HepG2 (cell line): ENCODE measurements at regions of chr2 and their contacts with region 1.

Region 1: GRCh38 chr2:25878361-25879132 is at the start of gene ASXL2:
- DNase-seq: peak; percentile 97
- ATAC-seq: peak; percentile 92
- H3K4me3 ChIP-seq: peak within 1 kb of the TSS; percentile 97 to 100 (median 99)
- H3K27ac ChIP-seq: peak within 1 kb of the TSS; percentile 88
- H3K4me1 ChIP-seq: peaks cover 65% of the 10 kb centered on the region
- H3K27me3 ChIP-seq: no peaks in the 10 kb centered on the region; a peak in 1 of 5 replicates
- CTCF ChIP-seq: peak; percentile 45
- EP300 ChIP-seq: no peak
- POLR2A ChIP-seq: peak; percentile 95 to 96
- RAD21 ChIP-seq: peak; percentile 58
- total RNA-seq, gene ASXL2: 12.1 and 20.6 TPM in 2 replicates

Region 2: GRCh38 chr2:25301453-25302352 is 576.8 kb before region 1 on chr2:
- CTCF ChIA-PET with region 1: no interaction called
- POLR2A ChIA-PET with region 1: no interaction called
- in situ Hi-C with region 1: no loop called
- intact Hi-C with region 1: no loop called
- DNase-seq: no peak
- ATAC-seq: no peak
- H3K4me3 ChIP-seq: no peak overlapping the region
- H3K27ac ChIP-seq: no peak overlapping the region
- H3K4me1 ChIP-seq: peaks cover under 1% of the 10 kb centered on the region; the same call in 1 of the 2 replicates
- H3K27me3 ChIP-seq: no peaks in the 10 kb centered on the region
- CTCF ChIP-seq: no peak
- EP300 ChIP-seq: no peak
- POLR2A ChIP-seq: no peak
- RAD21 ChIP-seq: no peak

Region 3: DNA sequence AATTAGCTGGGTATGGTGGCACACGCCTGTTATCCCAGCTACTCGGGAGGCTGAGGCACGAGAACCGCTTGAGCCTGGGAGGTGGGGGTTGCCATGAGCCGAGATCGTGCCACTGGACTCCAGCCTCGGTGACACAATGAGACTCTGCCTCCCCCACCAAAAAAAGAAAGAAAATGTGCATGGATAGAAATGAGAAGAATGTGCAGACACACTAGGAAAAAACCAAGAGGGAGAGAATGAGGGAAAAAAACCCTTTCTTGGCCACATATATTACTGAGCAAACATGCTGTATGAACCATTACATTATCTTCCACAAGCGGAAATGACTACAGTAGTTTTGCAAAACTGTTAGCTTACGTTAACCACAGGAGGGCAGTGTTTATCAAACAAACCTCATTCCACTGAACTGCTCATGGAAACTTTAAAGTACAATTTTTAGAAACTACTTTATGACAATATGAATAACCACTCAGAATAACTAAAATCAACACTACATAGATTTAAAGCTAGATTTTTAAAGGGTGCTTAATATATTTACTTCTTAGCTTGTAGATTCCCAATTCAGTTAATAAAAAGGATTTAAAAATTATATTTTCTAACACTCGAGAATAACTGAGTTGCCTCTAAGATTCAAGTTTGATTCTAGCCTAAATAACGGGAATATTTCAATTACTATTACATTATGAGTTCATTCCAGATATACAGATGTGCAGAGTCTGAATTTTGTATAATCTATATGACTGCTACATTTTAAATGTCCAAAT is 26.6 kb before region 1 on chr2:
- CTCF ChIA-PET with region 1: no interaction called
- POLR2A ChIA-PET with region 1: interaction called, 28 read pairs
- in situ Hi-C with region 1: no loop called
- intact Hi-C with region 1: no loop called
- DNase-seq: peak; percentile 86
- ATAC-seq: peak; percentile 92
- H3K4me3 ChIP-seq: no peak overlapping the region; a peak in 1 of 6 replicates
- H3K27ac ChIP-seq: peak overlapping the region; percentile 50
- H3K4me1 ChIP-seq: peaks cover 21% of the 10 kb centered on the region
- H3K27me3 ChIP-seq: no peaks in the 10 kb centered on the region
- CTCF ChIP-seq: peak; percentile 87
- EP300 ChIP-seq: peak in 1 of 2 experiments; percentile 35; a peak in 1 of 4 replicates
- POLR2A ChIP-seq: no peak
- RAD21 ChIP-seq: peak; percentile 85

Region 4: DNA sequence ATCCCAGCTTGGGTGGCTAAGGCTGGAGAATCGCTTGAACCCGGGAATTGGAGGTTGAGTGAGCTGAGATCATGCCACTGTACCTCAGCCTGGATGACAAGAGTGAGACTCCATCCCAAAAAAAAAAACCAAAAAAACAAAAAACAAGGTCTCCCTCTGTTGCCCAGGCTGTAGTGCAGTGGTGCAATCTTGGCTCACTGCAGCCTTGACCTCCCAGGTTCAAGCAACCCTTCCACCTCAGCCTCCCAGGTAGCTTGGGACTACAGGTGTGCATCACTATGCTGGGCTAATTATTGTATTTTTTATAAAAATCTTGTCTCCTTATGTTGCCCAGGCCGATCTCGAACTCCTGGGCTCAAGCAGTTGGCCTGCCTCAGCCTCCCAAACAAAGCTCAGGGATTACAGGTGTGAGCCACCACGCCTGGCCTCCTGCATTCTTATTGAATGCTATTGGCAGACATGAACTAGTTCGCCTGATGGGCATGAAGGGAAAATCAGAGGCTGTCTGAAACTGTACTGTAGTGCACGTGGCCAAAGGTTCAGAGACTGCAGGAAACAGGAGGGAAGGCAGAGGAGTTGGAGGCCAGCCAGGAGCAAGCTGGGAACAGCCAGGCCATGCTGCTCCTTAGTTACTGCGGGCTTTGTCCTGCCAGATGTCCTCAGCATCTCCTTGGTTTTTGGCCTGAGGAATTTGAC is 15.7 kb after region 1 on chr2:
- CTCF ChIA-PET with region 1: no interaction called
- POLR2A ChIA-PET with region 1: interaction called, 45 read pairs
- in situ Hi-C with region 1: no loop called
- intact Hi-C with region 1: no loop called
- DNase-seq: peak; percentile 49
- ATAC-seq: peak; percentile 81
- H3K4me3 ChIP-seq: no peak overlapping the region
- H3K27ac ChIP-seq: no peak overlapping the region
- H3K4me1 ChIP-seq: peaks cover 43% of the 10 kb centered on the region
- H3K27me3 ChIP-seq: no peaks in the 10 kb centered on the region
- CTCF ChIP-seq: no peak
- EP300 ChIP-seq: 0 out of 4 replicates have a peak, but pooled peaks of 1 of the 2 experiments have one; percentile 16
- POLR2A ChIP-seq: no peak
- RAD21 ChIP-seq: no peak

Region 5: GRCh38 chr2:25951071-25951547 is 72.6 kb after region 1 on chr2:
- CTCF ChIA-PET with region 1: no interaction called
- POLR2A ChIA-PET with region 1: interaction called, 11 read pairs
- in situ Hi-C with region 1: no loop called
- intact Hi-C with region 1: no loop called
- DNase-seq: peak; percentile 83
- ATAC-seq: peak; percentile 85
- H3K4me3 ChIP-seq: peak overlapping the region in 1 of 3 experiments; percentile 14; a peak in 1 of 6 replicates
- H3K27ac ChIP-seq: no peak overlapping the region
- H3K4me1 ChIP-seq: peaks cover 39% of the 10 kb centered on the region
- H3K27me3 ChIP-seq: no peaks in the 10 kb centered on the region
- CTCF ChIP-seq: peak; percentile 98
- EP300 ChIP-seq: 0 out of 4 replicates have a peak, but pooled peaks of 1 of the 2 experiments have one; percentile 15
- POLR2A ChIP-seq: no peak
- RAD21 ChIP-seq: peak; percentile 98

Region 6: GRCh38 chr2:26345545-26346453 is 467.3 kb after region 1 on chr2 and contains the start of gene SELENOI:
- CTCF ChIA-PET with region 1: no interaction called
- POLR2A ChIA-PET with region 1: interaction called, 10 read pairs
- in situ Hi-C with region 1: no loop called
- intact Hi-C with region 1: no loop called
- DNase-seq: peak; percentile 100
- ATAC-seq: peak; percentile 95
- H3K4me3 ChIP-seq: peak within 1 kb of the TSS; percentile 89 to 96 (median 94)
- H3K27ac ChIP-seq: peak within 1 kb of the TSS; percentile 97
- H3K4me1 ChIP-seq: peaks cover 63% of the 10 kb centered on the region
- H3K27me3 ChIP-seq: no peaks in the 10 kb centered on the region; a peak in 1 of 5 replicates
- CTCF ChIP-seq: no peak; the same call in 1 of the 2 replicates
- EP300 ChIP-seq: peak; percentile 46 to 56; a peak in 3 of 4 replicates
- POLR2A ChIP-seq: peak; percentile 94 to 99
- RAD21 ChIP-seq: peak; percentile 33; the same call in 1 of the 2 replicates
- total RNA-seq, gene SELENOI: 60.3 and 66.0 TPM in 2 replicates

Region 7: DNA sequence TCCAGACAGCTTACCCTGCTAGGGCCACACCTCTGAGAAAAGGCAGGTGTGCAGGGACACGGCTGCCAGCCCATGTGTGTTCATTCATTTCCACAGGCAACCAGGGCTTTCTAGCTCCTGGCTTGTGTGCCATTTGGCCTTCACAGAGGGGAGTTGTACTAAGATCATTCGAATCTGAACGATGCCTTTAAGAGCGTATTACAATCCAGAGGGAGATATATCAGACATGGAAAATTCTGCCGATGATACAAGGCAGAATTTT is 663.6 kb after region 1 on chr2:
- CTCF ChIA-PET with region 1: no interaction called
- POLR2A ChIA-PET with region 1: no interaction called
- in situ Hi-C with region 1: no loop called
- intact Hi-C with region 1: no loop called
- DNase-seq: no peak
- ATAC-seq: no peak
- H3K4me3 ChIP-seq: no peak overlapping the region
- H3K27ac ChIP-seq: no peak overlapping the region
- H3K4me1 ChIP-seq: no peaks in the 10 kb centered on the region
- H3K27me3 ChIP-seq: peaks cover 4 to 47% of the 10 kb centered on the region in 2 experiments
- CTCF ChIP-seq: no peak
- EP300 ChIP-seq: no peak
- POLR2A ChIP-seq: no peak
- RAD21 ChIP-seq: no peak